ENCODE measurements at regions of chr3 and their contacts with region 1.

Region 1: DNA sequence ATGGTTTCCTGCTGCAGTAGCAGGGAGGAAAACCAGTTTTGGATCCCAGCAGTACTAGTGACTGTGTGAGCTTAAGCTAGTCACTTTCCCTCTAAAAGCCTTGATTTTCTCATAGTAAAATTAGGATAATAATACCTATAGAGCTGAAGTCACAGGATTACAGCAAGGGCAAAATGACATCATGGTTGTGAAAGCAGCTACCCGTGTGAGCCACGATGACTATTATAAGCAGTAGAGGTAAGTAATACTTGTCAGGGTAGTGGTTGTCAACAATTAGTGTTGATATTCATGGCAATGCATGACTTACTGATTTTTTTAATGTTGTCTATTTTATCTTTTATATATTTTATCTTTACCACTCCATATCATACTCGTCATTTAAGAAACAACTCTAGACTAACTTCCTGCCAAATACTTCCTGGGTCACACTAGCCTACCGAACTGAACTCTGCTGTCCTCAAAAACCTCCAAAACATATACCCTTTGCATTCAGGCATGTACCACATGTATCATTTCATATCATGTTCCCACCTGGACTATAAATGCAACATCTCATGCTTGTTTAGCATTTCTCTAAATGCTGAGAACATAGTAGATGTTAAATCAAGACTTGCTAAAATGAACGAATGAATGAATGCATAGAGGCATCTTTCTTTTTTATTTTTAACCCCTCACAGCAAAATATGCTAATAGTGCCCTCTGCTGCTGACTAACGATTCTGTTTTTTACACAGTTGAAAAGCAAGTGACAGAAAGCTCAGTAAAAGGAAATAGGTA is 172.6 kb downstream of the P3H2 start:
- DNase-seq: peak; percentile 86
- ATAC-seq: peak; percentile 50
- H3K4me3 ChIP-seq: no peak overlapping the region
- H3K27ac ChIP-seq: peak overlapping the region; percentile 34; the same call in 1 of the 2 replicates
- H3K4me1 ChIP-seq: peaks cover 37% of the 10 kb centered on the region
- H3K27me3 ChIP-seq: no peaks in the 10 kb centered on the region
- CTCF ChIP-seq: peak; percentile 93

Region 2: DNA sequence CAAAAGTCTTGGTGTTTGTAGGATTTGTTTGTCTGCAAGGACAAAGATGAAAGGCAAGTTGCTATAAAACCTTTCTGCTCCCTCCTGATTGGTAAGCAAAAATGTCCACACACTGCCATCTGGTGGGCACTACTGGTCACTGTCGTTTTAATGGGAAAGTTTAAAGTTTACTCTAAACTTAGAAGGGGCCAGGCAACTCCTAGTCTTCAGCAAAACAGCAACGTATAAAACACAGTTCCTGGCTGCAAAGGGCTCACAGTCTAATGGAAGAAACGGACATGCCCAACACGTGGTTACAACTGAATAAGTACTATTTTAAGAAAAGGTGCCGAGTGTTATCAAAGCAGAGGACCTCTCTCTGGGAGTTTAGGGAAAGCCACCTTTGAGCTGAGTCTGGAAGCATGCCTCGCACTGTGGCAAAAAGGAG is 800.0 kb before region 1 on chr3:
- CTCF ChIA-PET with region 1: no interaction called
- POLR2A ChIA-PET with region 1: no interaction called
- intact Hi-C with region 1: loop called (anchors 10 kb)
- DNase-seq: peak; percentile 82
- ATAC-seq: peak; percentile 80
- H3K4me3 ChIP-seq: no peak overlapping the region
- H3K27ac ChIP-seq: no peak overlapping the region
- H3K4me1 ChIP-seq: no peaks in the 10 kb centered on the region
- H3K27me3 ChIP-seq: no peaks in the 10 kb centered on the region
- CTCF ChIP-seq: peak; percentile 90

Region 3: DNA sequence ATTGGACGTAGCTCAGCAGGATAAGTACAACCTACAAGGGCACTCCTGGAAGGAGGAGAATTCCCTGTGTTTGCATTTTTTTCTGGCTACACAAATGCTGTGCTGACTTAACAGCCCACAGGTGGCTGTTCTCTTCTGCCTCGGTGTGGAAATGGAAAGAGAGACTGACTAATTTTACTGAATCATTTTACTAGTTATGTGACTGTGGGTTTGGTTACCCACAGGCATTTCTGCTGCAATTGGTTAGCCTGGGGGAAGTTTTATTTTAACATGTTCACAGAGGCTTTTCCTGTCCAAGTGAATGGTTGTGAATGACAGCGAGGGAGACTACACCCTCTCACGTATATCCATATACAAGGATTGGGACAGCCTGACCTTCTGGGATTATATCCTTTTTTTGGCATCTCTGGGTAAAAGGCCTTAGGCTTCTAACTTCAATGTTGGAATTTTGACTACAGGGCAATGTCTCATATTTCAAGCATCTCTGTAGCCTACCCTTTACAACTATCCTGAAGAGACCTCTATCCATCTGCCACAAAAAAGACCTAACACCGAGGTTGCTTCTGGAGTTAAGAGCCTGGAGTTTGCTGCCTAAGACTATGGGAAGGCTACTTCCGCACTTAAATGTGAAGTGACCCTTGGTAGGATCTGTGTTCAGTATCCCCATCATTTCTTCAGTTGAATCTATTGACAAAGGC is 384.1 kb before region 1 on chr3:
- CTCF ChIA-PET with region 1: no interaction called
- POLR2A ChIA-PET with region 1: no interaction called
- intact Hi-C with region 1: loop called (anchors 2 kb)
- DNase-seq: peak; percentile 97
- ATAC-seq: peak; percentile 96
- H3K4me3 ChIP-seq: peak overlapping the region; percentile 28; the same call in 1 of the 2 replicates
- H3K27ac ChIP-seq: peak overlapping the region; percentile 66
- H3K4me1 ChIP-seq: peaks cover 23% of the 10 kb centered on the region
- H3K27me3 ChIP-seq: no peaks in the 10 kb centered on the region
- CTCF ChIP-seq: no peak; the same call in 1 of the 2 replicates

Region 4: GRCh38 chr3:189685854-189686253 is 262.3 kb before region 1 on chr3:
- CTCF ChIA-PET with region 1: interaction called, 4 read pairs
- POLR2A ChIA-PET with region 1: interaction called, 3 read pairs
- intact Hi-C with region 1: loop called (anchors 1 kb)
- DNase-seq: peak; percentile 97
- ATAC-seq: peak; percentile 97
- H3K4me3 ChIP-seq: peak overlapping the region; percentile 32; the same call in 1 of the 2 replicates
- H3K27ac ChIP-seq: peak overlapping the region; percentile 96
- H3K4me1 ChIP-seq: peaks cover 44% of the 10 kb centered on the region
- H3K27me3 ChIP-seq: no peaks in the 10 kb centered on the region
- CTCF ChIP-seq: no peak